Ascending aorta (tissue), 2 donors: ENCODE measurements at regions of chr3 and their contacts with region 1.

Region 1: DNA sequence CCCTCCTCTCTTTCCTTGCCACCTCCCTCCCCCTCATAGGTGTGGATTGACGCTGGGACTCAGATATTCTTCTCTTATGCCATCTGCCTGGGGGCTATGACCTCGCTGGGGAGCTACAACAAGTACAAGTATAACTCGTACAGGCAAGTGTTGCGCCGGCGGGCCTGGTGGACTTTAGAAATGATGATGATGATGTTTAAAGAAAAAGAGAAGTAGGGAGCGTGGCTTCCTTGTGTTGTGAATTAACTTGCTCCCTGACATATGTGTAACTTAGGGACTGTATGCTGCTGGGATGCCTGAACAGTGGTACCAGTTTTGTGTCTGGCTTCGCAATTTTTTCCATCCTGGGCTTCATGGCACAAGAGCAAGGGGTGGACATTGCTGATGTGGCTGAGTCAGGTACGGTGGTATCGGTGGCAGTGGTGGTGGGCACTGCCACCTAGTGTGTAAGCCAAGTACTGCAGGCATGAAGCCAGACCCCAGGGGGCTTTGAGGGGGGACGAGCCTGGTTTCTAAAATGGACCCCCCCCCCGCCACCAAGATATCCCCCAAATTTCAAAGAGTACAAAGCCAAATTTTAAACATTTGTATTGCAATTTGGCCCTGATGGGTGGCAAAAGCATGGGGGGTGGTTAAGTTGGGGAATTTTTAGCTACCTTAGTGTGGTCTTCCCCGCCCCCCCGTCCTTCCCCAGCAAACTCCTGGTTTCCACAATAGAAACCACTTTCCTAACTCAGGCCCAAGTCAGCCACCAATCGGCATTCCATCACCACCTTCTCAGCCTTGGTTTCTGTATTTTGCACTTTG is 65.6 kb downstream of the SLC6A6 start:
- DNase-seq: no peak
- H3K4me3 ChIP-seq: no peak overlapping the region
- H3K27ac ChIP-seq: no peak overlapping the region
- H3K4me1 ChIP-seq: no peaks in the 10 kb centered on the region
- H3K27me3 ChIP-seq: no peaks in the 10 kb centered on the region
- CTCF ChIP-seq: peak; percentile 86 to 92 (median 89)

Region 2: GRCh38 chr3:14203521-14204079 is 264.4 kb before region 1 on chr3:
- intact Hi-C with region 1: loop called (anchors 2 kb)
- DNase-seq: peak in 1 of 2 donors; percentile 78
- H3K4me3 ChIP-seq: no peak overlapping the region
- H3K27ac ChIP-seq: peak overlapping the region in 1 of 2 donors; percentile 24
- H3K4me1 ChIP-seq: peaks cover 8 to 18% of the 10 kb centered on the region in 2 donors
- H3K27me3 ChIP-seq: no peaks in the 10 kb centered on the region
- CTCF ChIP-seq: peak; percentile 66 to 89 (median 82)